ENCODE measurements at regions of chr6 and their contacts with region 1.

Region 1: GRCh38 chr6:17281100-17281494 is at the start of gene RBM24:
- DNase-seq: no peak
- ATAC-seq: peak; percentile 11
- total RNA-seq, gene RBM24: 181 TPM

Region 2: GRCh38 chr6:17167327-17167979 is 113.6 kb before region 1 on chr6:
- intact Hi-C with region 1: loop called (anchors 5 kb)
- DNase-seq: no peak
- ATAC-seq: peak; percentile 87

Region 3: GRCh38 chr6:17212546-17213371 is 68.3 kb before region 1 on chr6:
- intact Hi-C with region 1: loop called (anchors 5 kb)
- DNase-seq: no peak
- ATAC-seq: peak; percentile 70